ENCODE measurements at regions of chr3 and their contacts with region 1.

Region 1: DNA sequence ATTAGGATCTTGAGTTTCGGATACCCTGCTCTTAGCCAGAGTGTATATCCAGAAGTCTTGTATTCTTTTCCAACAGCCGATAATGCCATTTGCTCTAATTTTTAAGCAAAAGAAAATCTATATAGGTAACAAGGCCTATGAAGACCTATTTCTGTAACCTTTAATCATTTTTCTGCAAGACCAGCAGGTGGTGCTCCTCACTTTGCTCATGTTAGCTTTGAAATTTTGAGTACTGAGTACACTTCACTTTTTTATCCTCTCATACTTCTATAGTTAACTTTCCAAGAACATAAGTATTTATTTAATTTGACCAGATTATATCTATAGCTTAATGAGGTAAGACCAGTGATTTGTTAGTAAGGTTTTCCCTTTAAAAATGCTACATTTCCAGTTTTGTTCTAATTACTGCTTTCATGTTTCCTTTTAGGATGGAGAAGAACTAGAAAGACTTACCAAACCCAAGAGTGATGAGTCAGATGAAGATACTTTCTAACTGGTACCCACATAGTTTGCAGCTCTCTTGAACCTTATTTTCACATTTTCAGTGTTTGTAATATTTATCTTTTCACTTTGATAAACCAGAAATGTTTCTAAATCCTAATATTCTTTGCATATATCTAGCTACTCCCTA is 20.5 kb downstream of the SLC35A5 start:
- DNase-seq: peak; percentile 42
- H3K4me3 ChIP-seq: no peak overlapping the region
- H3K27ac ChIP-seq: no peak overlapping the region
- H3K27me3 ChIP-seq: no peaks in the 10 kb centered on the region
- CTCF ChIP-seq: peak; percentile 71

Region 2: DNA sequence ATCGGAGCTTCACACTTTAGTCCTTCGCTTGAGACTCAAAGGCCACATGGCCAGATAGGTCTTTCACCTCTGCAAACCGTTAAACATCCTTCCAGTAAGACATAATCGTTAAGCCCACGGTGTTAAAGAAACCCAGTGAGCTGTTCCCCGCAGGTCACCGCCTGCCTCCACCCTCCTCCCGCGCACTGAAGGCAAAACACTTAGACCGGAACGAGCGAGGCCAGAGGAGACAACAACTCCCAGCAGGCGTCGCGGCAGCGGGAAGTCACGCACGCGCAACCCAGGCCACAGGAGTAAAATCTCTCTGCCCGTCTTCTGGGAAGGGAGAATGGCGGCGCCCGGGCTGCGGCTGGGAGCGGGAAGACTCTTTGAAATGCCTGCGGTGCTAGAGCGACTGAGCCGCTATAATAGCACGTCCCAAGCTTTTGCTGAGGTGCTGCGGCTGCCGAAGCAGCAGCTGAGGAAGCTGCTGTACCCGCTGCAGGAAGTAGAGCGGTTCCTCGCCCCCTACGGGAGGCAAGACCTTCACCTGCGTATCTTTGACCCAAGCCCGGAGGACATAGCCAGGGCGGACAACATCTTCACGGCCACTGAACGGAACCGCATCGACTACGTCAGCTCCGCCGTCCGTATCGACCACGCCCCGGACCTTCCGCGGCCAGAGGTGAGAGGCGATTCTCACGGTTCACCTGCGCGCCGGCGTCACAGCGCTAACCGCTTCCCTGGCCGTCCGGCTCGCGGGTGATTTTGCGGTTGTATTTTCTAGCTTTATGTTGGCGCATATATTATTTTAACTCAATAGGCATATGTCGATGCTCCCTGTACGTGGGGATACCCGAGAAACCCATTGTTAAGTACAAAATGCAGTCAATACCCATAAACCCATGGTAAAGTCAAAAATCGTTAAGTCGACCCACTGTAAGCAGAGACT is 408.6 kb after region 1 on chr3 and contains the start of gene GTPBP8:
- in situ Hi-C with region 1: loop called (anchors 25 kb)
- DNase-seq: peak; percentile 85
- H3K4me3 ChIP-seq: peak within 1 kb of the TSS; percentile 79
- H3K27ac ChIP-seq: peak within 1 kb of the TSS; percentile 82
- H3K27me3 ChIP-seq: no peaks in the 10 kb centered on the region
- CTCF ChIP-seq: no peak